GM12878 (cell line): ENCODE measurements at regions of chr6 and their contacts with region 1.

Region 1: DNA sequence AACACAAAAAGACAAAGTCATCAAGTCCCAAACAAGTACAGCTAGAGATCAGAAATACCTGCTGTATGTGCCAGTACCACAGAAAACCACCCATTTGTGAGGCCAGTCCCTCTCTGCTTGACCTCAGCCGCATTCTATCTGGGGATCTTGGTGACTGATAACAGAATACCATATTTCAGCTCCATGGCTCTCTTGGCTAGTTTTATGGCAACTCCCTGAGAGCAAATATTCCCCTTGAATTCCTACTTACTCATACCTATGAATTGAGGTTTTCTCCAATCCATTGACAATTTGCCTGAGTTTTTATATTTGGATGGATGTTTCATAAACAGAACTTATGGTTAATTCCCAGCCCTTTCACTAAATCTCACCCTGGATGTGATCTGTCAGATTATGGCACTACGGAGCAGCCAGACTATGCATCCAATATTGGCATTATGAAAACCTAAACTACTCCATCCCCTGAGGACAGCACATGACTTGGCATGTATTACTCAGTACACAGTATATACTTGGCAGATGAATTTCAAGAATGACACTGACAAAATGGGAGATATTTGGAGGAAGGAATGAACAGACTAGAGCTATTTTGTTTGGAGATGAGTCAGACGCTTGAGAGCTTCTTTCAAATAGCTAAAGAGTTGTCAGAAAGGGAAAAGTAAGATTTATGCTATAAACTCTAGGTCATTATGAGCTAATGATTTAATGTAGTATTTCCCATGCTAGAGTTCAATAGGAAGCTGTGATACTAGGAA is 95.7 kb downstream of the PRDM1 start:
- DNase-seq: peak; percentile 40
- ATAC-seq: peak; percentile 57
- H3K4me3 ChIP-seq: no peak overlapping the region
- H3K27ac ChIP-seq: peak overlapping the region; percentile 74
- H3K4me1 ChIP-seq: peaks cover 45% of the 10 kb centered on the region
- H3K27me3 ChIP-seq: no peaks in the 10 kb centered on the region
- CTCF ChIP-seq: no peak
- EP300 ChIP-seq: no peak
- POLR2A ChIP-seq: no peak
- RAD21 ChIP-seq: no peak

Region 2: DNA sequence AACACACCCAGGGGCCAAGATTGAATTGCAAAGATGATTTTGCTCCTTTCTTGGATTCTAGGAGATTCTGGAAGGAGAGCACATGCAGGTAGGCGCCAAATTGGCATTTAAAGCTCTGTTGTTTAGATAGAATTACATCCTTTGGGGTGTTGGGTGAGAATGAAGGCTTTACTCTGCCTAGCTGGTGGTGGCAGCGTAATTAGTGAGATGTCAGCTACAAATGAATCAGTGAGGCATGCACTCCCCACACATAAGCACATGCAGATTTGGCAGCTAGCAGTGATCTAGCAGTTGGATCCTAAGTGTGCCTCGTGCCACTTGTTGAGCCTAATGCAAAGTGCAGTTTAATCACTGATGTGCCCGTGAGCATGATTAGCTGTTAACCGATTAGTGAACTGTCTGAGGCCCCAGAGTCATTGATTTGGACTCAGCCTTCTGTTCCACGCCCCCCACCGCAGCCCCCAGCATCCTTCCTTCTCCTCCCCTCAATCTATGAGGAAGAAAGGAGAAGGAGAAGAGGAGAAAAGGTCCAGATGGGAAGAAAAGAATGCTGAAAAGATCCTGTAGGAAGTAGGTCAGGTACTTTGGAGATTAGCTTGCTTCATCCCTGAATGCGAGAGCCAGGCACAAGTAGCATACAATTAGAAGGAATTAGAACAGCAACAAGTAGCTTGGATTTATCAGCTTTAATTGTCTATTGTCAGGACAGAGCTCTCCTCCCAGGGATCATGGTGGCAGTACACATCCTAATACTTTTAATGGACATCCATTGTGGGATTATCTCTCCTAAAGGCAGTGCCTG is 101.7 kb before region 1 on chr6:
- CTCF ChIA-PET with region 1: no interaction called
- POLR2A ChIA-PET with region 1: no interaction called
- RAD21 ChIA-PET with region 1: no interaction called
- SMC1A ChIA-PET with region 1: no interaction called
- in situ Hi-C with region 1: no loop called
- intact Hi-C with region 1: no loop called
- DNase-seq: no peak
- ATAC-seq: no peak
- H3K4me3 ChIP-seq: no peak overlapping the region
- H3K27ac ChIP-seq: no peak overlapping the region
- H3K4me1 ChIP-seq: peaks cover 16% of the 10 kb centered on the region
- H3K27me3 ChIP-seq: peaks cover 0 to 4% of the 10 kb centered on the region in 2 experiments; a peak in 2 of 4 replicates
- CTCF ChIP-seq: no peak
- EP300 ChIP-seq: no peak
- POLR2A ChIP-seq: no peak
- RAD21 ChIP-seq: no peak

Region 3: GRCh38 chr6:106097411-106098231 is 84.2 kb before region 1 on chr6:
- CTCF ChIA-PET with region 1: interaction called, 4 read pairs
- POLR2A ChIA-PET with region 1: interaction called, 3 read pairs
- RAD21 ChIA-PET with region 1: interaction called, 15 read pairs
- SMC1A ChIA-PET with region 1: interaction called, 33 read pairs
- in situ Hi-C with region 1: no loop called
- intact Hi-C with region 1: loop called (anchors 1 kb)
- DNase-seq: peak; percentile 78
- ATAC-seq: peak; percentile 68
- H3K4me3 ChIP-seq: peak overlapping the region; percentile 72
- H3K27ac ChIP-seq: peak overlapping the region; percentile 80
- H3K4me1 ChIP-seq: peaks cover 34% of the 10 kb centered on the region
- H3K27me3 ChIP-seq: no peaks in the 10 kb centered on the region
- CTCF ChIP-seq: no peak
- EP300 ChIP-seq: peak; percentile 65 to 68
- POLR2A ChIP-seq: no peak
- RAD21 ChIP-seq: no peak

Region 4: DNA sequence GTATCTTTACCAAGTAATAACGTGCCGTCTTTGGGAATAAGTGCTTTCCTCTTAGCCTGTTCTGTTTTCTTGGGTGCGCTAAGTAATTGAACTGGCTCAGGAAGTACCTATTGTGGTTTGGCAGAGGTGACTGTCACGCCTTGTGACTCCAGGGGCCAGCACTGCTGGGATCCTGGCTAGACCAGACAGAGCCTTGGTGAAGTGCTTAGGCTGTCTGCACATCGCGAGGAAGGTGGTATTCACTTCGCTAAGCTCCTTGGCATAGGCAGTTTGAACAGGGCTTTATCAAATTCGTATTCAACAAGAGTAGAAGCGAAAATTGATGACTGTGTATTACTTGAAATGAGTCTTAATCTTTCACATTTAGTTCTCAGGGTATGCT is 78.1 kb before region 1 on chr6:
- CTCF ChIA-PET with region 1: interaction called, 4 read pairs
- POLR2A ChIA-PET with region 1: interaction called, 3 read pairs
- RAD21 ChIA-PET with region 1: interaction called, 15 read pairs
- SMC1A ChIA-PET with region 1: interaction called, 33 read pairs
- in situ Hi-C with region 1: no loop called
- intact Hi-C with region 1: loop called (anchors 1 kb)
- DNase-seq: no peak
- ATAC-seq: peak; percentile 56
- H3K4me3 ChIP-seq: 0 out of 2 replicates have a peak overlapping the region, but pooled peaks have one; percentile 6
- H3K27ac ChIP-seq: 0 out of 2 replicates have a peak overlapping the region, but pooled peaks have one; percentile 15
- H3K4me1 ChIP-seq: peaks cover 46% of the 10 kb centered on the region
- H3K27me3 ChIP-seq: no peaks in the 10 kb centered on the region; a peak in 1 of 4 replicates
- CTCF ChIP-seq: no peak
- EP300 ChIP-seq: no peak
- POLR2A ChIP-seq: no peak
- RAD21 ChIP-seq: no peak

Region 5: GRCh38 chr6:106194949-106195921 is 13.4 kb after region 1 on chr6:
- CTCF ChIA-PET with region 1: interaction called, 13 read pairs
- POLR2A ChIA-PET with region 1: interaction called, 3 read pairs
- RAD21 ChIA-PET with region 1: interaction called, 4 read pairs
- SMC1A ChIA-PET with region 1: interaction called, 19 read pairs
- in situ Hi-C with region 1: no loop called
- intact Hi-C with region 1: no loop called
- DNase-seq: no peak
- ATAC-seq: peak; percentile 56
- H3K4me3 ChIP-seq: no peak overlapping the region
- H3K27ac ChIP-seq: peak overlapping the region; percentile 37; the same call in 1 of the 2 replicates
- H3K4me1 ChIP-seq: peaks cover 11% of the 10 kb centered on the region; the same call in 1 of the 2 replicates
- H3K27me3 ChIP-seq: no peaks in the 10 kb centered on the region
- CTCF ChIP-seq: no peak
- EP300 ChIP-seq: no peak
- POLR2A ChIP-seq: no peak
- RAD21 ChIP-seq: no peak

Region 6: DNA sequence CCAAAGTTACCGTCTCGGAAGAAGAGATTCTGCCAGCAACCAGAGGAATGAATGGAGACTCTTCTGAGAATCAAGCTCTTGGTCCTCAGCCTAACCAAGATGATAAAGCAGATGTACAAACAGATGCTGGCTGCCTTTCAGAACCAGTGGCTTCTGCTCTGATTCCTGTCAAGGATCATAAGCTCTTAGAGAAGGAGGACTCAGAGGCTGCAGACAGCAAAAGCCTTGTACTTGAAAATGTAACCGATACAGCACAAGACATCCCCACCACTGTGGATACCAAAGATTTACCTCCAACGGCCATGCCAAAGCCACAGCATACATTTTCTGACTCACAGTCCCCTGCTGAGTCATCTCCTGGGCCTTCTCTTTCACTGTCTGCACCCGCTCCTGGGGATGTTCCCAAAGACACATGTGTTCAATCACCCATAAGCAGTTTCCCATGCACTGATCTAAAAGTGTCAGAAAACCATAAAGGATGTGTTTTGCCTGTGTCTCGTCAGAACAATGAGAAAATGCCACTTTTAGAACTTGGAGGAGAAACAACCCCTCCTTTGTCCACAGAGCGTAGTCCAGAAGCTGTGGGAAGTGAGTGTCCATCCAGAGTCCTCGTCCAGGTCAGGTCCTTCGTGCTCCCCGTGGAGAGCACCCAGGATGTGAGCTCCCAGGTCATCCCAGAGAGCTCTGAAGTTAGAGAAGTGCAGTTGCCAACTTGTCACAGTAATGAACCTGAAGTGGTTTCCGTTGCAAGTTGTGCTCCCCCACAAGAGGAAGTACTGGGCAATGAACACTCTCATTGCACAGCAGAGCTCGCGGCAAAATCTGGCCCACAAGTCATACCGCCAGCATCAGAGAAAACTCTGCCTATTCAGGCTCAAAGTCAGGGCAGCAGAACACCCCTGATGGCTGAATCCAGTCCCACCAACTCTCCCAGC is 337.9 kb after region 1 on chr6:
- CTCF ChIA-PET with region 1: no interaction called
- POLR2A ChIA-PET with region 1: no interaction called
- RAD21 ChIA-PET with region 1: no interaction called
- SMC1A ChIA-PET with region 1: no interaction called
- in situ Hi-C with region 1: no loop called
- intact Hi-C with region 1: loop called (anchors 5 kb)
- DNase-seq: peak; percentile 89
- ATAC-seq: peak; percentile 66
- H3K4me3 ChIP-seq: peak overlapping the region; percentile 73
- H3K27ac ChIP-seq: peak overlapping the region; percentile 93
- H3K4me1 ChIP-seq: no peaks in the 10 kb centered on the region
- H3K27me3 ChIP-seq: no peaks in the 10 kb centered on the region
- CTCF ChIP-seq: no peak
- EP300 ChIP-seq: peak; percentile 61 to 72
- POLR2A ChIP-seq: peak; percentile 78
- RAD21 ChIP-seq: no peak

Region 7: DNA sequence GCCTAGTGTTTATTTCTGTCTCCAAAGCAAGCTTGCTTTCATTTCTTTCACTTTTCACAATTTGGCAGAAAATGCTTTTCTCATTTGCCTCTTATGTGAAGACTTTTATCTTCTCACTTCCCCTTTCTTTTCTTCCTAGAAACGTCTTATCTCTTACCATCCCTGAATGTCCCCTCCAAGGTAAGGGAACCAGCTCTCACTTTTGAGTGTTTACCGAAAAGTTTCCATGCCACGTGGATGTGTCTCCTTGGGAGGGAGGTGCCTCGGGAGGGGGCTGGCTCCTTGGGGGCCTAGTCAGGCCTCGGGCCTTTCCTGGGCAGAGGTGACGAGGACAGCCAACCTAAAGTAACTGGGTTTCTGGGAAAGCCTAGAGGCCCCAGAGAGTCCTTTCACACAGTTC is 665.3 kb after region 1 on chr6:
- CTCF ChIA-PET with region 1: no interaction called
- POLR2A ChIA-PET with region 1: no interaction called
- RAD21 ChIA-PET with region 1: no interaction called
- SMC1A ChIA-PET with region 1: no interaction called
- in situ Hi-C with region 1: no loop called
- intact Hi-C with region 1: no loop called
- DNase-seq: peak; percentile 31
- ATAC-seq: peak; percentile 63
- H3K4me3 ChIP-seq: no peak overlapping the region; the same call in 1 of the 2 replicates
- H3K27ac ChIP-seq: peak overlapping the region; percentile 96
- H3K4me1 ChIP-seq: peaks cover 44% of the 10 kb centered on the region
- H3K27me3 ChIP-seq: no peaks in the 10 kb centered on the region
- CTCF ChIP-seq: no peak
- EP300 ChIP-seq: peak in 1 of 2 experiments; percentile 73; a peak in 2 of 4 replicates
- POLR2A ChIP-seq: no peak
- RAD21 ChIP-seq: no peak